Psoas muscle (tissue), 8 donors: ENCODE measurements at regions of chr4 and their contacts with region 1.

Region 1: DNA sequence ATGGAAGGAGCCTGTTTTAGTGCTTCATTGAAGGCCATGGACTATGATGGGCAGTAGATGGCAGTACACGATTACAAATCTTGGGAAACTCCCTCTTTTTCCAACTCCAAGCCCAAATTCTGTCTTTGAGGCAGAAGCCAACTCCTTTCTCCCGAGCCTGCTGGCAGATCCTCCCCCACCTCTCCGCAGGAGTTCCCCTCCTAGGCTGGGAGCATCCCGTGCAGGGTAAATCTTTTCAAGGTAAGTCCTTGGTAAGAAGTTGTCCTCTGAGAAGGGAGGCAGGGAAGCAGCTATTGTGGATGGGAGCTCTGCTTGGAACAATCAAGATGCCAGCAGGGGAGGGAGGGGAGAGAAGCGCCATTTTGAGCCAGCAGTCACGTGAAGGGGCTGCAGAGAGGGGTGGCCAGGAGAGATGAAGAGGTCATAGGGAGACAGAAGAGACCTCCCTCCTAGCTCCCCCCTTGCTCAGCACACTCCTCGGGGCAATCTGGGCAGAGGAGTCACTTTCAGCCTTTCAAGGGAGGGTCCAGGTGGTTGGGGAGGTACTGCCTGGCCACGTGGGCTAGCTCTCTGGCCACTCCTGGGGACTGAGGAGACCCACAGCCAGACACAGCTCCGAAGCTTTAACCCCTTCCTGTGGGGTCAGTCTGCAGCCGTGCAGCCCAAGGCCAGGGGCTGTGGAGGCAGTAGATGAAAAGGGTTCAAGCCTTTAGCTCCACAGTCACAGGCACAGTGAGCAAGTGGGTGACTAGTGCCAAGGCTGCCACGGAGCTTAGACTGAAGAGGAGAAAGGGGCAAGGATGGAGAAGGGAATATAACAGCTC is 9.6 kb downstream of the CC2D2A start:
- DNase-seq: peak in 1 of 2 donors; percentile 58
- ATAC-seq: peak; percentile 71 to 94 (median 82)
- H3K4me3 ChIP-seq: peak overlapping the region; percentile 48
- H3K27ac ChIP-seq: peak overlapping the region; percentile 14
- H3K4me1 ChIP-seq: no peaks in the 10 kb centered on the region
- H3K27me3 ChIP-seq: no peaks in the 10 kb centered on the region
- CTCF ChIP-seq: peak; percentile 64

Region 2: GRCh38 chr4:15395311-15395710 is 84.0 kb before region 1 on chr4:
- intact Hi-C with region 1: no loop called
- DNase-seq: no peak
- ATAC-seq: no peak
- H3K4me3 ChIP-seq: no peak overlapping the region
- H3K27ac ChIP-seq: no peak overlapping the region
- H3K4me1 ChIP-seq: no peaks in the 10 kb centered on the region
- H3K27me3 ChIP-seq: no peaks in the 10 kb centered on the region
- CTCF ChIP-seq: no peak

Region 3: DNA sequence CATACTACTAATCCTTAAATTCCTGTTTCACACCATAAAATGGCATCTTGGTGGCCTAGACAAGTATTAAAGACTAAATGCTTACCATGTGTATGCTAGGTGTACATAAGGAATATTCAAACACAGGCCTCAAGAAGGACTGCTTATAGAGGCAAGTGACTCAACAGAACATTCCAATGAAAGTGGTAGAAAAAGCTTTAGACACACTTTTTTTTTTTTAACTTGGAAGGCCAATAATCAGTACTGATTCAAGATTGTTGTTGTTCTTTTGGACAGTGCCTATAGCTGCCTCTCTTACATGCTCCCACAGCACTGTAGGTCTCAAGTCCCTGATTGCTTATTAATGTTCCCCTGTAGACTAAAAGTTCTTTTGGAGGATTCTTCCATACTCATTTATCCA is 98.2 kb after region 1 on chr4:
- intact Hi-C with region 1: no loop called
- DNase-seq: no peak
- ATAC-seq: no peak
- H3K4me3 ChIP-seq: no peak overlapping the region
- H3K27ac ChIP-seq: no peak overlapping the region
- H3K4me1 ChIP-seq: no peaks in the 10 kb centered on the region
- H3K27me3 ChIP-seq: no peaks in the 10 kb centered on the region
- CTCF ChIP-seq: no peak

Region 4: GRCh38 chr4:15649914-15650545 is 170.7 kb after region 1 on chr4:
- intact Hi-C with region 1: loop called (anchors 2 to 5 kb)
- DNase-seq: no peak
- ATAC-seq: peak; percentile 76 to 90 (median 87)
- H3K4me3 ChIP-seq: peak overlapping the region; percentile 20
- H3K27ac ChIP-seq: no peak overlapping the region
- H3K4me1 ChIP-seq: peaks cover 65% of the 10 kb centered on the region
- H3K27me3 ChIP-seq: no peaks in the 10 kb centered on the region
- CTCF ChIP-seq: peak; percentile 70

Region 5: DNA sequence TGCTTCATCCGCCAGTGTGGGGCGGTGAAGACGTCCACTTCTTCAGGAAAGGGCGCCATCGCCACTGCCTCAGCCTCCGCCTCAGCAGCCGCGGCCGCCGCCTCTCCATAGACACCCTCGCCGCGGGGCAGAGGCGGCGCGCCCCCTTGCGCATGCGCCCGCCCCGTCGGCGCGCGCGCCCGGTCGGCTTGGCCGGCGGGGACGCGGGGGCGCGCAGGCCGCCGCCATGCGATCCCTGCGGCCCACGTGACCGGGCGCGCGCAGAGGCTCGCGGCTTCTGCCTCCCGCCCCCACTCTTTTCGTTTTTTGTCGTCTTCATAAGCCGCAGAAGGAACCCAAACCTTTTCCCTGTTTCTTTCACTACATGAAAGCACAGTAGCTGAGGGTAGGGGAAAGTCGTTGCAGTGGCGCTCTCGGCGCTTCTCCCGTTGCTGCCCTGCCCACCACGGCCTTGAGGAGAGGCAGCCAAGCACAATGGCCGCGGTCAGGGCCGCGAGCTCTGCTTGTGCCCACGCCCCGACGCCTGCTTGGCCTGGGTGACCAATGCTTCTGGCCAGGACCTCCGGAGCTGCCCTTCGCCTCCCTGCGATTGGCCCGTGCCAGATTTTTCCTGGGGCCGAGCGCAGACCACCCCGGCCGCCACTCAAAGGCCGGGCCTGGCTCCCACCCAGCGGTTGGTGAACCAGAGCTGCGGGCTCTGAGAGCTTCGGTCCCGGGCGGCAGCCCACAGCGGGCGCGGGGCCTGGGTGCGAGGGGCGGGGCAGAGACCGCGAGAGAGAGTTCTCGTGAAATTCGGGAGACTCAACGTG is 176.1 kb after region 1 on chr4 and contains the start of gene FBXL5:
- intact Hi-C with region 1: loop called (anchors 2 to 5 kb)
- DNase-seq: peak; percentile 84 to 90
- ATAC-seq: peak; percentile 93 to 94 (median 93)
- H3K4me3 ChIP-seq: peak within 1 kb of the TSS; percentile 83
- H3K27ac ChIP-seq: peak within 1 kb of the TSS; percentile 100
- H3K4me1 ChIP-seq: peaks cover 31% of the 10 kb centered on the region
- H3K27me3 ChIP-seq: no peaks in the 10 kb centered on the region
- CTCF ChIP-seq: no peak
- total RNA-seq, gene FBXL5: 53.9 to 91.2 (median 67.9) TPM

Region 6: GRCh38 chr4:15882675-15883086 is 403.4 kb after region 1 on chr4:
- intact Hi-C with region 1: loop called in 1 of 2 experiments (anchors 5 kb)
- DNase-seq: peak in 1 of 2 donors; percentile 57
- ATAC-seq: peak; percentile 83 to 97 (median 87)
- H3K4me3 ChIP-seq: no peak overlapping the region
- H3K27ac ChIP-seq: no peak overlapping the region
- H3K4me1 ChIP-seq: peaks cover 5% of the 10 kb centered on the region
- H3K27me3 ChIP-seq: no peaks in the 10 kb centered on the region
- CTCF ChIP-seq: peak; percentile 88

Region 7: DNA sequence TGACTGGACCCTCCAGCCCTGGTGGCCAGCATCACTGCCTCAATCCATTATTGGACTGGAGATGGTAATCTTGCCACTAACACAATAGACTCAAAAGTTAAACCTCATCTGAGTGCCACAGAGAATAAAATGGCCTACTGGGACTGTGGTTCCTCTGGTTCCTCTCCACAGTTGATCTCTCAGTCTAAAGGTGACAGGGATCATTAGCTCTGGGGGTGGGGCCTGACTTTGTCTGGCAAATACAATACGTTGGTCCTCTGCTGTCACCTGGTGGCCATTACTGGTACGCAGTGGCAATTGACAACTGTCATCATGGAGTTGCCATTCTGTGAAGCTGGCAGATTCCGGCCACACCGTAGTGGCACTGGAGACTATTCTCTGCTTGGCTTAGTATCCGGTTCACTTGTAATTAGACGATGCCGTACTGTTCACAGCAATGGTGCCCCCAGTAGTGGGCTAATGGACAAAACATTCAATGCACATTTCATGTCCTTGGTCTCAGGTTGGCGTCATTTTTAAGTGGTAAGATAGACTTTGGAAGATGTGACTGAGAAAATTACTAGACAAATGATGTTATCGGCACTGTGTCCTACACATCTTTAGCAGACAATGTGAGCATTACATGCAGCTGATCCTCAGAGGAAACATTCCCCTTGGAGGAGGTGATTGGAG is 477.0 kb after region 1 on chr4:
- intact Hi-C with region 1: loop called in 1 of 2 experiments (anchors 5 kb)
- DNase-seq: peak; percentile 72 to 83
- ATAC-seq: peak; percentile 92 to 99 (median 96)
- H3K4me3 ChIP-seq: no peak overlapping the region
- H3K27ac ChIP-seq: no peak overlapping the region
- H3K4me1 ChIP-seq: peaks cover 2% of the 10 kb centered on the region
- H3K27me3 ChIP-seq: no peaks in the 10 kb centered on the region
- CTCF ChIP-seq: peak; percentile 90

Region 8: GRCh38 chr4:16001484-16001858 is 522.2 kb after region 1 on chr4:
- intact Hi-C with region 1: loop called in 1 of 2 experiments (anchors 5 kb)
- DNase-seq: peak in 1 of 2 donors; percentile 29
- ATAC-seq: peak; percentile 91 to 100 (median 96)
- H3K4me3 ChIP-seq: no peak overlapping the region
- H3K27ac ChIP-seq: no peak overlapping the region
- H3K4me1 ChIP-seq: peaks cover 3% of the 10 kb centered on the region
- H3K27me3 ChIP-seq: no peaks in the 10 kb centered on the region
- CTCF ChIP-seq: peak; percentile 85